ENCODE measurements at regions of chr6 and their contacts with region 1.

Region 1: GRCh38 chr6:145633981-145634627 is 101.2 kb downstream of the EPM2A start:
- H3K4me3 ChIP-seq: no peak overlapping the region
- H3K27ac ChIP-seq: no peak overlapping the region
- H3K4me1 ChIP-seq: peaks cover 10% of the 10 kb centered on the region; the same call in 1 of the 2 replicates
- CTCF ChIP-seq: peak; percentile 89

Region 2: GRCh38 chr6:144588674-144589325 is 1045.3 kb before region 1 on chr6:
- CTCF ChIA-PET with region 1: interaction called, 22 read pairs
- POLR2A ChIA-PET with region 1: no interaction called
- H3K4me3 ChIP-seq: no peak overlapping the region
- H3K27ac ChIP-seq: no peak overlapping the region
- H3K4me1 ChIP-seq: peaks cover 3% of the 10 kb centered on the region; the same call in 1 of the 2 replicates
- CTCF ChIP-seq: no peak

Region 3: DNA sequence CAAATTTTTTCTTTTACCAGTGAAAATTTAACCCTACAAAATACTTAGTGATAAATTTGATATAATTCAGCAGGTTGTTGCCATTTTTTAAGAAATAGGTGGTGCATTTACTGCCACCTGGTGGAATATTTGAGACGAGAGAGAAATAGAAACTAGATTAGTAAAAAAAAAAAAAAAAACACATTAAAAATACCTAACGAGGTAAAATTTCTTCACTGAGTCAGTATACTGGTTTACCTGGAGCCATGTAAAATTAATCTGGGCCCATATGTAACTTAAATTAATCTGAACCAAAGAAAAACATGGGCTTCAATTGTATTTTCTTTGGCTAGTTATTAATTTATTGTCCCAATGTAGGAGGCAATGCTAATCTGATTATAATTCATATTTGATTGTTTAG is 419.5 kb before region 1 on chr6:
- CTCF ChIA-PET with region 1: interaction called, 10 read pairs
- POLR2A ChIA-PET with region 1: no interaction called
- H3K4me3 ChIP-seq: no peak overlapping the region
- H3K27ac ChIP-seq: no peak overlapping the region
- H3K4me1 ChIP-seq: no peaks in the 10 kb centered on the region
- CTCF ChIP-seq: no peak

Region 4: DNA sequence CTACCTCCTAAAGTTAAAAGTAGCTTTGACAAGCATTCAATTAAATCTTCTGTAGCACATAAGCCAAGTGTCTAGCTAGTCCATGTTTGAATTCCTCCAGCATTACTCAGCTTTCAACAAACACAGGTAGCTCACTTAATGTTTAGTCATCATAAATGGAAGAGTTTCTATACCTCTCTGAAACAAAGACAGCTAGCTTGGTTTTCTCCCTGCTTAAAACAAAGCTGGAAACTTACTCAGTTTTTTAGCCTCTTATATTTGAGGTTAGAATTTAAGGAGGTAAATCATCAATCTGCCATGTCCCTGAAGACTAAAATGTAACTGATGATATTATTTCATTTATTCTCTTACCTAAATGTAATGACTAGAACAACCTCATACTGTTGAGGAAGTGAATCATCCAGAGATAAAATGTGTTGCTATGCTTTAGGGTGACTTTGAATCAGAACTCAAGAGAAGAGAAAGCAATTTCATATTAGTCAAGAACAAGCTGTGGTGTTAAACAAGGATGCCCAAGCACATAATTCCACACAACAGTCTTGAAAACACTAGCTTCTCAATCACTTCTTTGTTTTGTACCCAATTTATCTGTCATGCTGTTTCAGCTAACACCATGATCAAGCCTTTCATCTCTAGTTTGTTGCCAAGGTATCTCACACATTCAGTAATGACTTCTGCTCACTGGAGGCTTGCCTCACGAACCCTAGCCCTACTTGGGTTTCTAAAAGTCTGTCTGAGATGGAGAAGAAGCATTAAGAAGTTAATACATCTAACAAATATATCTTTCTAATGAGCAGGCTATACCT is 150.7 kb before region 1 on chr6:
- CTCF ChIA-PET with region 1: interaction called, 12 read pairs
- POLR2A ChIA-PET with region 1: no interaction called
- H3K4me3 ChIP-seq: no peak overlapping the region
- H3K27ac ChIP-seq: no peak overlapping the region
- H3K4me1 ChIP-seq: no peaks in the 10 kb centered on the region
- CTCF ChIP-seq: no peak

Region 5: GRCh38 chr6:145798530-145798929 is 164.4 kb after region 1 on chr6:
- CTCF ChIA-PET with region 1: no interaction called
- POLR2A ChIA-PET with region 1: no interaction called
- H3K4me3 ChIP-seq: no peak overlapping the region
- H3K27ac ChIP-seq: no peak overlapping the region
- H3K4me1 ChIP-seq: no peaks in the 10 kb centered on the region
- CTCF ChIP-seq: no peak

Measured in HEK293 (cell line).